Activated CD8-positive, alpha-beta T cell treated with anti-CD3 and anti-CD28 coated beads for 36 hours (primary cell): ENCODE measurements at regions of chr19 and their contacts with region 1.

Region 1: DNA sequence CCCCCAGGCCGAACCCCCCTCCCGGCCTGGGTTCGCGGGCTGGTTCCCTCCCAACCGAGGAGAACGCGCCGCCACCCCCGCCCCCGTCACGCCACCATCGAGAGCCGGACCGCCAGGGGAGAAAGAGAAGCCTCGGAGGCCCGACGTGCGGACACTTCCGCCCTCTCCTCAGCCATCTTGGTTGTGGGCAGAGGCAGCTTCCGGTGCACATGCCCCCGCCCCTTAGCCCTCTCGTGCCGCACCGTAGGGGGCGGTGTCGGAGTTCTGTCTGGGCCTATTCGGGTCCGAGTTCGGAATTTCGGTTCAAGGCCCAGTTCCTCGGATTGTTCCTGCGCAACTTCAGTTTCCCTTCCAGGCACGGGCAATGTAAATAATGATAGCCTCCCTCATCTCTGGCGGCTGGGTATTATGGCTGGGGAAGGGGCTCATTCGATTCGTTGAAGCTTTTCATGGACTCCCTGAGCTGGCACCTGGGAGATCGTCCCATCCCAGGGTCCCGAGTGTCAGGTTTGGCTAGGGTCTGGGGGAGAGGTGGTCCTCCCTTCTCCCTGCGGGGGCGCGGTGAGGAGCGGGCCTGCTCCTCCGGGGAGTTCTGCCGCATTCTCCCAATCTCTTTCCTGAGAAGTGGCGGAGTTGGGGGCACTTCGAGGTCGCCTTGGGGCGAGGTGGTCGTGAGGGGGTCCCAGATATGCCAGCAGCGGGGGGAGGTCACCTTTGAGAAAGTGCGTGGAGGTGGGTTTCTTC is at the starts of genes IER2 and STX10:
- DNase-seq: peak; percentile 95
- ATAC-seq: peak; percentile 49
- H3K4me3 Mint-ChIP-seq: peak within 1 kb of the TSS; percentile 83
- H3K27ac Mint-ChIP-seq: peak within 1 kb of the TSS; percentile 91
- H3K4me1 Mint-ChIP-seq: peaks cover 22% of the 10 kb centered on the region
- H3K27me3 Mint-ChIP-seq: no peaks in the 10 kb centered on the region
- CTCF ChIP-seq: peak; percentile 41
- total RNA-seq, gene IER2: 120 to 122 TPM
- total RNA-seq, gene STX10: 66.8 to 72.4 TPM

Region 2: GRCh38 chr19:13022859-13023636 is 127.3 kb before region 1 on chr19:
- CTCF ChIA-PET with region 1: no interaction called
- POLR2A ChIA-PET with region 1: no interaction called
- intact Hi-C with region 1: no loop called
- DNase-seq: peak; percentile 29
- ATAC-seq: peak; percentile 63
- H3K4me3 Mint-ChIP-seq: peak overlapping the region; percentile 64
- H3K27ac Mint-ChIP-seq: peak overlapping the region; percentile 12
- H3K4me1 Mint-ChIP-seq: peaks cover 18% of the 10 kb centered on the region
- H3K27me3 Mint-ChIP-seq: peaks cover 21% of the 10 kb centered on the region
- CTCF ChIP-seq: no peak

Region 3: DNA sequence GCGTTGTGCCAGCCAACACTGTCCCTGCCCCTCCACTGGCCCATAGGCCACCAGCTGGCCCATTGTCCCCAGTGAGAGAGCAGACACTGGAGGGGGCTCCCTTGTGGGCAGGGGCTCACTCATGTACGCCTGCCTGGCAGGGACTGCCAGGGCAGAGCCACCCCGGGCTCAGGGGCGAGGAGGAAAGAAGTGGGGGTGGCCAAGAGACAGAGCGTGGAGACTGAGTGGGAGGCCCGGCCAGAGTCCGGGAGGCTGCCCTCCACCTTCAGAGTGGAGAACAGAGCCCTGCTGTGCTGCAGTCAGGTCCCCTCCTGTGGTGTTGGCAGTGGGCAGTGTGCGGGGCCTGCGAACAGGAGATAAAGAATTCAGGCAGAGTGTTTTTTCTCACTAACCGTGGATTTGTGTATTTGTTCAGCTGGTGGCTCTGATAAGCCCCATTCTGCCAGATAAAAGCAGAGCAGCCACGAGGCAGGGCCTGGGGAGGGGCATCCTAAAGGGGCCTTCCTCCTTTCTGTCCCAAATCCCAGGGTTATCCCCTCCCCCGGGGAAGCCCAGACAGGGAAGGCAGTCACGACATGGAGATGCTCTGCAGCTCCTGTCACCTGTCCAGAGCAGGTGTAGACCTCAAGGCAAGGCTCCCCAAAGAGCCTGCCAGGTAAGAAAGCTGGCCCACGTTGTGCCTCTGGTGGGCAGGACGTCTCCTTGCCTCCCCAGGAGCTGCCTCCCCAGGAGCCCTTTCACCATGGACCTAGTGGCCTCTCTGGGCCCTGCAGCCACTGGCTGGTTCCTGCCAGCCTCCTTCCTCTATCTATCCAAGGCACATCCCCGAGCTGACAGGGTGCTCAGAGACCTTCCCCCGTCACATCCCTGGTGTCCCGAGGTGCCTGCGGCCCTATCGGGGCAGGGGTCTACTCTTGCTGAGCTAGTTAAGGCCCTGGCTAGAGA is 80.7 kb before region 1 on chr19:
- CTCF ChIA-PET with region 1: no interaction called
- POLR2A ChIA-PET with region 1: no interaction called
- intact Hi-C with region 1: no loop called
- DNase-seq: no peak
- ATAC-seq: no peak
- H3K4me3 Mint-ChIP-seq: no peak overlapping the region
- H3K27ac Mint-ChIP-seq: no peak overlapping the region
- H3K4me1 Mint-ChIP-seq: no peaks in the 10 kb centered on the region
- H3K27me3 Mint-ChIP-seq: no peaks in the 10 kb centered on the region
- CTCF ChIP-seq: no peak

Region 4: DNA sequence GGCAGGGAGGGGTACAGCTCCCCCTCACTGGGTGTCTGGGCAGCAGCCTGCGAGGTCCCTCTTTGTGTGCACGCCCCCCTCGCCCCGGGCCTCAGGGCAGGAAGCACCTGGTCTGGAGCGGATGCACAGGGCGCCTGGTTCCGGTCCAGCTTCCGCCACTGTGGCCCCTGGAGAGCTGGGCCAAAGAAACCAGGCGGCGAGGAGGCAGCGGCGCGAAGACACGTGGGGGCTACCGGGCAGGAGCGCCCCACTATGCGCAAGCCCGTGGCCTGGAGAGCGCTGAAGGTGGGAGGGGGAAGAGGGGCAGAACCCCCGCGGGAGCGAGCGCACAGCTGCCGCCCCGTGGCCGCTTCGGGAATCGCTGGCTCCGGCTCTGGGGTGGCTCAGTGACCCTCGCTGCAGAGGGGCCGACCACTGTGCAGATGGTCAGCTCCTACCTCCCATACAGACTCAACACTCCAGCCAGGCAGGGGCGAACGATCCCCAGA is 46.0 kb before region 1 on chr19:
- CTCF ChIA-PET with region 1: interaction called, 5 read pairs
- POLR2A ChIA-PET with region 1: interaction called, 11 read pairs
- intact Hi-C with region 1: no loop called
- DNase-seq: peak; percentile 74
- ATAC-seq: peak; percentile 63
- H3K4me3 Mint-ChIP-seq: peak overlapping the region; percentile 80
- H3K27ac Mint-ChIP-seq: peak overlapping the region; percentile 86
- H3K4me1 Mint-ChIP-seq: peaks cover 28% of the 10 kb centered on the region
- H3K27me3 Mint-ChIP-seq: no peaks in the 10 kb centered on the region
- CTCF ChIP-seq: peak; percentile 98

Region 5: DNA sequence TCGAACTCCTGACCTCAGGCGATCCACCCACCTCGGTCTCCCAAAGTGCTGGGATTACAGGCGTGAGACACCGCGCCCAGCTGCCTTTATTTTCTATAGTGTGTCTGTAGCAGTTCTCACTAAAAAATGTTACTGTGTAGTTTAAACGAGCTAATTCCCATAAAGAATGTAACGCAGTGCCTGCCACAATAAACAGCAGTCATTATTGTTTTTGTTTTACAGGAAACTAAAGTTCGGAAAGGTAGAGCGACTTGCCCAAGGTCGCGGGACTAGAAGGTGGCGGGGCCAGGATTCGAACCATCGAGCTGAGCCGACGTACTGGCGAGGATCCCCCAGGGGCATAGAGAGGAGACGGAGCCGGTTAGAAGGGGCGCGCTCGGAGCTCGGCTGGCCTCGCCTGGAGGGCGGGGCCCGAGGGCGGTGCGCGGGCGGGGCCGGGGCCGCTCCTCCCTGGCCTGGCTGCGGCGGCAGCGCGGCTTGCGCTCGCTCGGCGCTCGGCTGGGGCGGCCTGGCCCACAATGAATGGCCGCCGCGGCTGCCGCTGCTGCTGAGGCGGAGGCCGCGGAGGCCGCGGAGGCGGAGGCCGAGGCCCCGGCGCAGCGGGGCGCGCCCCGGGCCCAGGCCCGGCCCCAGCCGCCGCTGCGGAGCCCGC is 32.5 kb before region 1 on chr19 and contains the start of gene NACC1:
- CTCF ChIA-PET with region 1: interaction called, 8 read pairs
- POLR2A ChIA-PET with region 1: interaction called, 36 read pairs
- intact Hi-C with region 1: loop called (anchors 5 kb)
- DNase-seq: peak; percentile 92
- ATAC-seq: peak; percentile 84
- H3K4me3 Mint-ChIP-seq: peak within 1 kb of the TSS; percentile 86
- H3K27ac Mint-ChIP-seq: peak within 1 kb of the TSS; percentile 95
- H3K4me1 Mint-ChIP-seq: peaks cover 52% of the 10 kb centered on the region
- H3K27me3 Mint-ChIP-seq: no peaks in the 10 kb centered on the region
- CTCF ChIP-seq: no peak
- total RNA-seq, gene NACC1: 73.8 to 87.5 TPM

Region 6: DNA sequence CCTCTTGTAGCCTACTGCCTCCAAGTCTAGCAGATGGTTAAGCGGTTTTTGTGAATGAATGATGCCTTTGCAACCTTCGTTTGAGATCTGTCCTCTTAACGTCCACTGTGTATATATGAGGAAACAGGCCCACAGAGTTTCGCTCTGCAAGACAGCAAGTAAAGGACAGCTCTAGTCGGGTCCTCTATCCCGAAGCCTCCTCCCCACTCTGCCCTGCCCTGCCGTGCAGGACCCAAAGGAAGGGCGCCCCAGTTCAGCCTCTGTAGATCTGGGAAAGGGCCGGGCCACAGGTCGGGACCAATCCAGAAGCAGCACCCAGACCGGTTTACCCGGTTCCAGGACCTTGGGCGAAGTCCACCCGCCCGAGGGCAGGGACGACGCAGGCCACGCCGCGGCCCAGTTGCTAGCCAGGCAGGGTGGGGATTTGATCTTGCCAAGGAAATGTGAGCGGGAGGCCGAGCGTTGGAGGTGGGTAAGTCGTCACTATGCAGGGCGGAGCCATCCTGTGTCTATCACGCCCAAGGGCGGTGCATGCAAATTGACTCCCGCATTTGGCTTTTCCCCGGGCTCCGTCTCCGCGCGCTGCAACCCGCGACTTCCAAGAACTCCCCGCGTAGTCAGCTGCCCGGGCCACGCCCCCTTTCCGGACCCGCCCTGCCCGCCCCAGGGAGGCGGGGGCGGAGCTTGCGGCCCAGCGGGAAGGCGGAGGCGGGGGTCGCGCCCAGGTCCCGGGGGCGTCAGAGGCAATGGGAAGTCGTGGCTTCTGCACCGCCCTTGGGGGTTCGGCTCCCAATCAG is 12.4 kb after region 1 on chr19:
- CTCF ChIA-PET with region 1: interaction called, 37 read pairs
- POLR2A ChIA-PET with region 1: interaction called, 226 read pairs
- intact Hi-C with region 1: no loop called
- DNase-seq: peak; percentile 96
- ATAC-seq: peak; percentile 53
- H3K4me3 Mint-ChIP-seq: peak overlapping the region; percentile 84
- H3K27ac Mint-ChIP-seq: peak overlapping the region; percentile 92
- H3K4me1 Mint-ChIP-seq: peaks cover 54% of the 10 kb centered on the region
- H3K27me3 Mint-ChIP-seq: no peaks in the 10 kb centered on the region
- CTCF ChIP-seq: no peak

Region 7: GRCh38 chr19:13181747-13182388 is 31.5 kb after region 1 on chr19:
- CTCF ChIA-PET with region 1: interaction called, 3 read pairs
- POLR2A ChIA-PET with region 1: interaction called, 11 read pairs
- intact Hi-C with region 1: no loop called
- DNase-seq: peak; percentile 86
- ATAC-seq: peak; percentile 81
- H3K4me3 Mint-ChIP-seq: peak overlapping the region; percentile 37
- H3K27ac Mint-ChIP-seq: peak overlapping the region; percentile 86
- H3K4me1 Mint-ChIP-seq: peaks cover 28% of the 10 kb centered on the region
- H3K27me3 Mint-ChIP-seq: no peaks in the 10 kb centered on the region
- CTCF ChIP-seq: no peak